Mammary epithelial cell (primary cell): ENCODE measurements at regions of chr11 and their contacts with region 1.

Region 1: DNA sequence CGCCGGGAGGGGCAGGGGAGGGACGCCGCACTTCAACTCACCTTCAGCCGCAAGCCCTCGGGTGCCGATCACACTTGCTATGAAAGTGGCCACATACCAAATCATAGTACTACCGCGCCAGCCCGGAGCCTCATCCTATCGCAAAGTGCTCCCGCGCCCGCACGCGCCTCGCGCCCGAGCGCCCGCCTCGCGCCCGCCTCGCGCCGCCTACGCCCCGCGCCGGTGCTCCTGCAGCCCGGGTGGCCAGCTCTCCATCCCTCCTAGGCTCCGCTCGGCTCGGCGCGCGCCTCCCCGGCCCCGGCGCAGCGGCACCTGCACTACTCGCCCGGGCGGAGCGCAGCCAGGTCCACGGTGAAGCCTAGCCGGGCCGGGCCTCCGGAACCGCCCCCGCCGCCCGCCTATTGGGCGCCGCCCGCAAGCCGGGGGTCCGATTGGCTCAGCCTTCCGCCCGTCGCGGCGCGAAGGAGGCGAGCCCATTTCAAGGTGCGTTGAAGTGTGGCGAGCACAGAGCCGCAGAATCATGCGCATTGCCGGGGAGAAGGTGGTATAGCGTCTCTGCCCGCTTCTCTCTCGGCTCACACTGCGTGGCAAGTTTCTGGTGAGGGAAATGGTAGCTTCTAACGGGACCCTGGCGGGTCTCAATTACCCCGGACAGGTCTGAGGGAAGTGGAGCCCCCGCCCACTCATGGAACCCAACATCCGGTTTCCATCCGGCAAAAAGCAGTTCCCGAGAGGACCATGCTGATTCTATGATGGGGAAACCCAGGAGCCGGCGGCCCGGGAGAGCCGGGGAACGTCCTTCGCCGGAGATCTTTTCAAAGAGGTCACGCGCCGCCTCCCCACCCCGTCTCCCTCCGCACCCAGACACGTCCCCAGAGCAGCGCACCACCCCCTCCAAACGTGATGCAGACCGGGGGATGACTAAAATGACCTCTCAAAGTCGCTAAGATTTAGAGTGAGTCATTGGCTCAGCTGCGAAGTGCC is at the start of gene IGSF9B:
- DNase-seq: peak; percentile 88
- H3K4me3 ChIP-seq: peak within 1 kb of the TSS; percentile 50 to 79 (median 66)
- H3K27ac ChIP-seq: no peak within 1 kb of the TSS
- H3K4me1 ChIP-seq: peaks cover 8% of the 10 kb centered on the region
- H3K27me3 ChIP-seq: peaks cover 13% of the 10 kb centered on the region
- CTCF ChIP-seq: no peak
- total RNA-seq, gene IGSF9B: 0.33 to 1.2 TPM

Region 2: DNA sequence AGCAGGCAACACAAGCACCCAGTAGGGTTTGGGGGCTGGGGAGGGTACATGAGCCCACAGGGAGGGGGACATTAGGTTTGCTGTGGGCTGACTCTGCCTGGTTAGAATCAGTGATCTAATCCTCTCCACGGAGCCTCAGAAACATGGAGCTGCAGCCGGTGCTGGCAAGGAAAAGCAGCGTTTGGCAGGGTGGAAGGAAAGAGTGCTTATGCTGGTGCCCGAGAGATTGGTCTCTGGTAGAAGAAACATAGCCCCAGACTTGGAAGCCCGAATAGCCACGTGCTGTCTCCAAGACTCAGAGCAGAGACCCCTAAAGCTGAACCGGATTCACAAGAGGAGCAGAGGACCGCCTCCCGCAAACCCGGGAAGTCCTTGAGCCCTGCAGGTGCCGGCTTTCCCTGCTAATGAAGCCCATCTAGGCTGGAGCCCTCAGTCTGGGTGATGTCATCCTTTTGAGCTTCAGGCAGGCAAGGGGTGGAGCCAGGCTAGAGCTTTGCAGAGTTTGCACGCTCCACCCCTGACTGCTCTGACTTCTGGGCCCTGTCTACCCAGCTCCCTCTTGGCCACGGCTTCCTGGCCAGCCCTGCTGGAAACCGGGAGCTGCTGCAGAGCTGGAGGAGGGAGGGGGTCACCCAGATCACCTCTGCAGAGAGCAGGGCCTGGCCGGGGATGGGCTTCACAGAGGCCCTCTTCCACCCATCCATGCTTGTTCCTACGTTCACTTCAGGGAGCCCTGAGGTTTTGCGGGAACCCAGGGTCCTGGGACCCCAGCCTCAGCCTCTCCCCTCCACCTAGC is 77.0 kb after region 1 on chr11:
- CTCF ChIA-PET with region 1: no interaction called
- dilution Hi-C with region 1: no loop called
- in situ Hi-C with region 1: no loop called
- intact Hi-C with region 1: loop called (anchors 2 kb)
- DNase-seq: peak; percentile 66
- H3K4me3 ChIP-seq: no peak overlapping the region
- H3K27ac ChIP-seq: no peak overlapping the region
- H3K4me1 ChIP-seq: peaks cover 39% of the 10 kb centered on the region
- H3K27me3 ChIP-seq: no peaks in the 10 kb centered on the region
- CTCF ChIP-seq: no peak